Naive thymus-derived CD8-positive, alpha-beta T cell (primary cell): ENCODE measurements at regions of chr2 and their contacts with region 1.

Region 1: DNA sequence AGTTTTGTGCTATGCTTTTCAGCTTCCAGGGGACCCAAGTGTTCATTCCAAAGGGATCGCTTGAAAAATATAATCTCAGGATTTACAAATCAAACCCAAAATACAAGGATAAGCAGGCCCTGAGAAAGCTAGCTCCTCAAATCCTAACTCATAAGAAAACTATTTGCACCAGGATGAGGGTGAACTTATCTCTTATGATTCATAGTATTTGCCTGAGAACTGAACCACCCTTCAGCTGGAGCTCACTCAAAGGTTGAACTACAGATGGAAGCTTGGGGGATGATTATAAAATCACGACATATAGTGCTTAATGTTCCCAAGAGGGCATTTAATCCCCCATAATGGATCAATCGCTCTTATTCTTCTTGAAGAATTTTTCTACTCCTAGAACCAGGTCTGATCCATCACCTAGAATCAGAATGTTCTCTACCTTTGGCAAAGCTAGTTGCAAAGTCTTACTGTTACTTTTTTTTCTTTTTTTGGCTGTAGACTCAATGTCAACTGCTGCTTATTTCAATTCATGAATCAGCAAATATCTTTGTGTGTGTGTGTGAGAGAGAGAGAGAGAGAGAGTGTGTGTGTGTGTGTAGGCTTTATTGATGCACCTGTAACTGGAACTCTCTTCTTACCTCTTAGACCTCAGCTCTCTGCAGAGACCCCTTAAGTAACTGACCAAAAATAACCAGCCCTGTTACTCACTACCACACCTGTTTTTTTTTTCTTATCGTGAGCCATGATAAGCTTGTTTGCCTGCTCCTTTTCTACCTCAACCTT is 44.8 kb downstream of the ARL4C start:
- DNase-seq: peak in 3 of 10 donors; percentile 37 to 59 (median 48)
- ATAC-seq: peak in 1 of 2 donors; percentile 9
- H3K4me3 Mint-ChIP-seq: peak overlapping the region; percentile 84 to 96 (median 90)
- H3K27ac Mint-ChIP-seq: peak overlapping the region; percentile 93 to 100 (median 98)
- H3K4me1 Mint-ChIP-seq: peaks cover 39 to 97% (median 84%) of the 10 kb centered on the region in 4 donors
- H3K27me3 Mint-ChIP-seq: peaks cover 0 to 3% (median 0%) of the 10 kb centered on the region in 5 donors

Region 2: DNA sequence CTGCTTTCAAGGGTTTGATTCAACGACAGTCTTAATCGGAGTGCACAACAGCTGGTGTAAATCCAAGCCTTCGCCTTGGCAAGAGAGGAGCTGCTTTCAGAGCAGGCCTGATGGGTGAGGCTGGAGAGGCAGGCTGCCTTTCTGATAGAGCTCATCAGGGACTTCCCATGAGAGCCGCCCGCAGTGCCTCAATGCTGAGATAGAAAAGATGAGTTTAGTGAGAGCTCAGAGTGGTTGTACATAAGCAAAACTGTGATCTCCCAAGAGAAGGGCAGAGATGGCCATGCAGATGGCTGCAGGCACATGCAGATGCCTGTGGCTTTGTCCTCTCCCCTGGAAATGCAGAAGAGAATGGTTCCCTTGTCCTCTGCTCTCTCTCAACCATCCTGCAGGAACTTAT is 77.3 kb before region 1 on chr2:
- POLR2A ChIA-PET with region 1: interaction called, 12 read pairs
- DNase-seq: no peak
- ATAC-seq: no peak
- H3K4me3 Mint-ChIP-seq: no peak overlapping the region
- H3K27ac Mint-ChIP-seq: peak overlapping the region in 6 of 10 donors; percentile 47 to 96 (median 84)
- H3K4me1 Mint-ChIP-seq: peaks cover 27 to 54% (median 52%) of the 10 kb centered on the region in 4 donors
- H3K27me3 Mint-ChIP-seq: no peaks in the 10 kb centered on the region

Region 3: DNA sequence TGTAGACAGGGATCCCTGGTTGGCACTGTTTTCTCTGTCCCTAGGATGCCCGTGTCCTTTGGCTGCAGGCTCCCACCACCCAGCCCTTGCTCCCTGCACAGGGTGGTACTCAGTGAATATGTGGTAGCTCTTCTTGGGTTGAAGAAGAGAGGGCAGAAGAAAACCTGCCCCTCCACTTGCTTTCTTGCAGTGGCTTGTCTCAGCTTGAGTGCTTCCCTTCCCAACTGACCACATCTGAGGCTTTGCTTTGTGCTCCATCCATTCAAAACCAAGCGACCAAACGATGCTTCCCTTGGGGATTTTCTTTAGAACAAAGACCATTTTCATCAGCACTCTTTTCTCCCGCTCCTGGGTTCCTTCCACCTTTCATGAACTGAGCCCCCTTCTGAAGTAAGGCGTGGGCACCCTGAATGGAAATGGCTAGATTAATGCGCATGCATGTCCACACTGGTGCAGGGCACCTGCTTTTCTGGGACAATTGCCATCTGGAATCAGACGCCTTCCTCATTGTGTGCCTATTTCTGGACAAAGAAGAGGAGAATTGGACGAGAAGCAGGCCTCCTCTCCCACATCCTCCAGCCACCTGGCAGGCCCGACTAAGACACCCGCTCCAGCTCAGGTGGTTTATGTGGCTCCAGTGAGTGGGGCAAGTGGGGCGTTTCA is 14.3 kb before region 1 on chr2:
- POLR2A ChIA-PET with region 1: interaction called, 593 read pairs
- DNase-seq: peak in 1 of 10 donors; percentile 12
- ATAC-seq: peak in 1 of 2 donors; percentile 12
- H3K4me3 Mint-ChIP-seq: peak overlapping the region in 9 of 10 donors; percentile 13 to 82 (median 72)
- H3K27ac Mint-ChIP-seq: peak overlapping the region; percentile 84 to 96 (median 91)
- H3K4me1 Mint-ChIP-seq: peaks cover 44 to 91% (median 82%) of the 10 kb centered on the region in 4 donors
- H3K27me3 Mint-ChIP-seq: no peaks in the 10 kb centered on the region

Region 4: GRCh38 chr2:234483568-234484251 is 31.7 kb after region 1 on chr2:
- POLR2A ChIA-PET with region 1: interaction called, 80 read pairs
- DNase-seq: peak; percentile 59 to 94 (median 86)
- ATAC-seq: peak; percentile 74 to 79
- H3K4me3 Mint-ChIP-seq: peak overlapping the region; percentile 41 to 84 (median 79)
- H3K27ac Mint-ChIP-seq: peak overlapping the region; percentile 89 to 99 (median 97)
- H3K4me1 Mint-ChIP-seq: peaks cover 24 to 92% (median 73%) of the 10 kb centered on the region in 4 donors
- H3K27me3 Mint-ChIP-seq: no peaks in the 10 kb centered on the region

Region 5: DNA sequence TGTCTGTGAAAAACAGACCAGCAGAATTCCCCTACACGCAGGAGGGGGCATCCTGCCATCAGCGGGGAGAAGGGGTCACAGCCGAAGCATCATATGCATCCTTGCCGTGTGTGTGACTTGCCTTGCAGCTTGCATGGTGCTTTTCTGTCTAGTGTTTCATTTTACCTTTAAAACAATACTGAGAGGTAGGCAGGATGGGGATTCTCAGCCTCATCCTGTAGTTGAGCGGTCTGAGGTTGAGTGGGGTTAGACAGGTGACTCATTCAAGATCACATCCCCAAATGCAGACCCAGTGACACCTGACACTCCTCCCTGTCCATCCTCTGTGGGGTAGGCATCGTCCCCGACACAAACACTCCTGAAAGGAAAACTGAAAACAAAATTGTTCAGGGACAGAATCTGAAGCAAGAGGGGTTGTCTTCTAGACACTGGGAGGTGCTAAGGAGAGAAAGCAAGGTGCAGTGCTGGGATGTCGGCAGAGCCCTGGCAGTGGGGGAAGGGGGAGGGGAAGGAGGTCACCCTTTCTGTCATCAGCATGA is 36.9 kb after region 1 on chr2:
- POLR2A ChIA-PET with region 1: interaction called, 289 read pairs
- DNase-seq: peak; percentile 40 to 88 (median 80)
- ATAC-seq: peak; percentile 75 to 82
- H3K4me3 Mint-ChIP-seq: peak overlapping the region; percentile 85 to 100 (median 90)
- H3K27ac Mint-ChIP-seq: peak overlapping the region; percentile 95 to 100 (median 99)
- H3K4me1 Mint-ChIP-seq: peaks cover 44 to 93% (median 85%) of the 10 kb centered on the region in 4 donors
- H3K27me3 Mint-ChIP-seq: no peaks in the 10 kb centered on the region

Region 6: DNA sequence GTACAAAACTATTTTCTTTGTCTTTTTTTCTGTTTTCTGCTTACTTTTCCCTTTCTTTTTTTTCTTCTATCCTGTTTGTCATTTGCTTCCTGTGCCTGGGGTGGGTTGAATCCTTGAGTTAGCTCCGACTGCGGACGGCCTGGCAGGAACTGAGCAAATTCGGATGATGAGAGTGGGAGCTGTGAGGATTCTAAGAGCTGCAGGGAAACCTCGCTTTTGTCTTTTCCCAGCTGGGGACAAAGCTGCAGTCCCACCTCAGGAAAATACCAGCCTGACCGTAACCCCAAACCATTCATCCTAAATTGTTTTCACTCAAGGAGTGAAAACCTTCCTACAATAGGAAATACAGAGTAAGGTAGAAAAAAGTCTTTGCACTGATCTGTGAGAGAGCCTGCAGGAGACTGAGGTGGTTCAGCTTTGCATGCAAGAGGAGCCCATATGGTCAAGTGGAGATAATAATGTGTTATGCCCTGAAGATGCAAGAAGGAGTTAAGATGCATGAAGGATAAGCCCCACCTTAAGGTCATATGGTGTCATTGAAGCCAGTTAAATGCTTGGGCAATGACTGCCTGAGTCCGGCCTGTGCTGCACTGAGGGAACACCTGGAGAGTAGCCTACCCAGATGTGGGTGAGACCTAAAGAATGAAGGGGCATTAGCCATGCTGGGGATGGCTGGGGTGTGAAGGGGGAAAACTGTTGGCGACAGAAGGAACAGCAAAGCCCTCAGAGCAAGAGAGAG is 76.5 kb after region 1 on chr2:
- POLR2A ChIA-PET with region 1: no interaction called
- DNase-seq: no peak
- ATAC-seq: no peak
- H3K4me3 Mint-ChIP-seq: no peak overlapping the region
- H3K27ac Mint-ChIP-seq: no peak overlapping the region
- H3K4me1 Mint-ChIP-seq: peaks cover 0 to 2% (median 0%) of the 10 kb centered on the region in 4 donors
- H3K27me3 Mint-ChIP-seq: peaks cover 7 to 14% (median 10%) of the 10 kb centered on the region in 5 donors